Endothelial cell of umbilical vein (primary cell): ENCODE measurements at regions of chr6 and their contacts with region 1.

Region 1: DNA sequence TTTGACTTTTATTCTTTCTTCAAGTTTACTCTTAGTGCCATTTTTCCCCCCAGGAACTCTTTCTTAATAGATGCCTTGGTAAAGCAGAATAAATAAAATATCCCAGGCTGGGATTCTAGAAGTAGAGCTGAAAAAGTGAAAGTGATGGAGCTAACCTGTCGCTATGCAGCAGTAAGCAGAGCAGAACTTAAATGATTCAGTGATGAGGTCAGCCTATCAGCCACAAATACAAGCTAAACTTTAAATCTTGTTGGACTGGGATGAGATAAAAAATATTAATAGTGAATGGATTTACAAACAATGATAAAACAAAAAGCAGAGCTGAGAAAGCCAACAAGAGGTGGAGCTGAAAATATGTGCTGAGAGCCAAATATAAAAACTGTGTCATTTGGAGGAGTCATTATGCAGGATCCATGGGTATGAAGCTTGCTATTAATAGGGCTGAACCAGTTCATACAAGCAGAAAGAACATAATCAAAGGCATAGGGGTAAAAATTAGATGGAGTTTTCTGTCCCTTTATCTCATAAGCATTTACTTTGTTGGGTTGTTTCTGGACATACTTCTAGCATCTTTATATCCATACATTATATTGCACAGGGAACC is 877.8 kb downstream of the EPHA7 start:
- DNase-seq: no peak
- H3K4me3 ChIP-seq: no peak overlapping the region
- H3K27ac ChIP-seq: no peak overlapping the region
- H3K4me1 ChIP-seq: peaks cover 49% of the 10 kb centered on the region
- H3K27me3 ChIP-seq: no peaks in the 10 kb centered on the region
- CTCF ChIP-seq: no peak
- POLR2A ChIP-seq: no peak

Region 2: DNA sequence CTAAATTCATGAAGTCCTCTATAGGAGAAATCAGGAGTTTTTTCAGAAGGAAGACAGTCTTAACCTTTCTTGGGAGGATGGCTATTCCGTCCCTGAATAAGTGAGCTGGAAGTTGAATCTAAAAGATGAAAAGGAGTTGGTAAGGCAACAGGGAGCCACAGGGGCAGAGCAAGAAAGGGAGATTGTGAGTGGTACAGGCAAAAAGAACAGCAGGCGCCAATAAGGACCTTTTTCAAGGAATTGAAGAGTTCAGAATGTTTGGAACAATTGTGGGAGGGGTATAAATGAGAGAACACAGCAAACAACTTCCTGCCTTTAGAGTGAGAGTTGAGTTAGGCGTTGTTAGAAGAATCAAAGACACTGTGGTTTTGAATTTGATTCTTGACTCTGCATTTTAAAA is 125.9 kb before region 1 on chr6:
- CTCF ChIA-PET with region 1: no interaction called
- POLR2A ChIA-PET with region 1: no interaction called
- dilution Hi-C with region 1: no loop called
- intact Hi-C with region 1: no loop called
- DNase-seq: no peak
- H3K4me3 ChIP-seq: no peak overlapping the region
- H3K27ac ChIP-seq: no peak overlapping the region
- H3K4me1 ChIP-seq: no peaks in the 10 kb centered on the region
- H3K27me3 ChIP-seq: no peaks in the 10 kb centered on the region
- CTCF ChIP-seq: no peak
- POLR2A ChIP-seq: no peak

Region 3: GRCh38 chr6:92433911-92434310 is 107.6 kb before region 1 on chr6:
- CTCF ChIA-PET with region 1: no interaction called
- POLR2A ChIA-PET with region 1: no interaction called
- dilution Hi-C with region 1: no loop called
- intact Hi-C with region 1: no loop called
- DNase-seq: no peak
- H3K4me3 ChIP-seq: no peak overlapping the region
- H3K27ac ChIP-seq: no peak overlapping the region
- H3K4me1 ChIP-seq: no peaks in the 10 kb centered on the region
- H3K27me3 ChIP-seq: no peaks in the 10 kb centered on the region
- CTCF ChIP-seq: no peak
- POLR2A ChIP-seq: no peak

Region 4: DNA sequence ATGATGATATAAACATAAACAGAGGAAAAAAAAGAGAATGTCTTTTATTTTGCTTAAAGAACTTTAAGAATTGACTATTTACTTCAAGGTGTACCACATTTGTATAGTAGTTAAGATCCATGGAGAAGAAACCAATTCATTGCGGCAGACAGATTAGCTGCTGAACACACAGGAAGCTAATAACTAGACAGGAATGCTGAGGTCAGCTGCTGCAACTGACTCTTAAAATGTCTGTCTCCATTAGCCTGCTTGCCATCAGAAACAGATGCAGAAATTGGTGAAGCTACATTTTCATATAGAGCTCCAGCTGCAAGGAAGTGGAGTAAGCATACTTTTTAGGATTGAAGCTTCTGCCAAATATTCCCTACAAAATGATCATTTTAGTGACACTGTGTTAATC is 61.7 kb before region 1 on chr6:
- CTCF ChIA-PET with region 1: no interaction called
- POLR2A ChIA-PET with region 1: no interaction called
- dilution Hi-C with region 1: no loop called
- intact Hi-C with region 1: loop called (anchors 2 kb)
- DNase-seq: peak; percentile 61
- H3K4me3 ChIP-seq: no peak overlapping the region
- H3K27ac ChIP-seq: no peak overlapping the region
- H3K4me1 ChIP-seq: peaks cover 4% of the 10 kb centered on the region
- H3K27me3 ChIP-seq: no peaks in the 10 kb centered on the region
- CTCF ChIP-seq: no peak
- POLR2A ChIP-seq: no peak

Region 5: DNA sequence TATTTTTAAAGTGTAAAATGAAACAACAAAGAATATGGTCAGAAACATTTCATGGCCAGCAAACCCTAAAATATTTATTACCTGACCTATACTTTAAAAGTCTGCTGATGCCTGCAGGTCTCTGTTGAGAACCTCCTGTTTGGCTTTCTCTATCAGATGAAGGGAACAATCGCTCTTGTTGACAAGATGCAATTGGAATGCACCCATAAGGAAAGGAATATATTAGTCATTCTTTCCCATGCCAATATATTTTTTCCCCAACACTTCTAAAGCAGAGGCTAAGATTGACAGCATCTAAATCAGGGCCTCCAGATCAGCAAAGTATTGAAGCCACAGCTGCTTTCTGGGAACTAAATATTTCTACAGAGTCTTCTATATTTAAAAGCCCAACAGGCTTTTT is 20.0 kb before region 1 on chr6:
- CTCF ChIA-PET with region 1: interaction called, 3 read pairs
- POLR2A ChIA-PET with region 1: no interaction called
- dilution Hi-C with region 1: no loop called
- intact Hi-C with region 1: loop called (anchors 1 kb)
- DNase-seq: peak; percentile 95
- H3K4me3 ChIP-seq: no peak overlapping the region
- H3K27ac ChIP-seq: peak overlapping the region; percentile 76
- H3K4me1 ChIP-seq: peaks cover 17% of the 10 kb centered on the region
- H3K27me3 ChIP-seq: no peaks in the 10 kb centered on the region
- CTCF ChIP-seq: no peak
- POLR2A ChIP-seq: no peak

Region 6: DNA sequence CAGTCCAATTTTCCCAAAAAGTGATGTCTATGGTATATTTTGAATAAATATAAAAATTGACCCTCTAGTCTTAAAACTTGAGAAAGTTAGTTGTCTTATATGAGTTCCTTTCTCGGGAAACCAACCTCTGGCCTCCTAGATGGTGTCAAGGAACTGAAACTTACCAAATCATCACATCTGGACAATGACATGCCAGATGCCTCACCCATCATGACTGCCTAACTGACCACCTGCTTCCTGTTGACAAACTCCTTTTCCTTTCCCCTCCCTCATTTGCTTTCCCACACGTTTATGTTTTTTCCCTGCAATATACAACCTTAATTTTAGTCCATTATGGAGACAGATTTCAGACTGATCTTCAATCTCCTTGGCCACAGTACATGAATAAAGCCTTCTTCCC is 146.8 kb after region 1 on chr6:
- CTCF ChIA-PET with region 1: no interaction called
- POLR2A ChIA-PET with region 1: no interaction called
- dilution Hi-C with region 1: no loop called
- intact Hi-C with region 1: loop called (anchors 5 kb)
- DNase-seq: peak; percentile 9
- H3K4me3 ChIP-seq: no peak overlapping the region
- H3K27ac ChIP-seq: no peak overlapping the region
- H3K4me1 ChIP-seq: no peaks in the 10 kb centered on the region
- H3K27me3 ChIP-seq: no peaks in the 10 kb centered on the region
- CTCF ChIP-seq: no peak
- POLR2A ChIP-seq: no peak